GM12878 (cell line): ENCODE measurements at regions of chr17 and their contacts with region 1.

Region 1: DNA sequence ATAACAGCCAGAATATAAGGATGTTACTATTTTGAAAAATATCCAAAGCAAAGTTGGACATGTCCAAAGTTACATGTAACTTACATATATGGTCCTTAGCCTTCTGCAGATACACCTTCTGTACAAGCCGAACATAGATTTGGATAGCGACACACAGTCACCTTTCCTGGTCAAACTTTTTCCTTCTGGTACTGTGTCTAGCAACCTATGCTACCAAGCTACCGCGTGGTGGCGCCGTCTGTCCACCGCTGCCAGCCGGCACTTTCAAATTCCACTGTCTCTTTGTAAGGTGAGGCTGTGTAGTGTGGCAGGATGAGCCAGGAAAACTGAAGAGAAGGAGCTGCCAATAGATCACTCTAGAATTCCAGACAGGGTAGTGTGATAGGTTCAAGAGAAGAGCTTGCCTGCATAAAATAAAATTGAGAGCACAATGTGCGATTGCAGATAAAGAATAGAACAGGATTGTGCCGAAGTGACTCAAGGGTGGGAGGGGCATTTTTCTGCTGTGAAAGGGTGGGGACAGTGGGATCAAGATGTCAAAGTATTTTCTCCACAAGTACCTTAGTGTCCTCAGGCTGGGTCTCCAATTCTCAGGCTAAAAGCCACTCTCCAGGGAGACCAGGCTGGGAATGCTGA is 366.9 kb downstream of the SLC39A11 start:
- DNase-seq: no peak
- ATAC-seq: peak; percentile 59
- H3K4me3 ChIP-seq: no peak overlapping the region
- H3K27ac ChIP-seq: no peak overlapping the region
- H3K4me1 ChIP-seq: peaks cover 18% of the 10 kb centered on the region
- H3K27me3 ChIP-seq: no peaks in the 10 kb centered on the region
- CTCF ChIP-seq: peak; percentile 62 to 87 (median 75)
- EP300 ChIP-seq: no peak
- POLR2A ChIP-seq: no peak
- RAD21 ChIP-seq: peak; percentile 84

Region 2: DNA sequence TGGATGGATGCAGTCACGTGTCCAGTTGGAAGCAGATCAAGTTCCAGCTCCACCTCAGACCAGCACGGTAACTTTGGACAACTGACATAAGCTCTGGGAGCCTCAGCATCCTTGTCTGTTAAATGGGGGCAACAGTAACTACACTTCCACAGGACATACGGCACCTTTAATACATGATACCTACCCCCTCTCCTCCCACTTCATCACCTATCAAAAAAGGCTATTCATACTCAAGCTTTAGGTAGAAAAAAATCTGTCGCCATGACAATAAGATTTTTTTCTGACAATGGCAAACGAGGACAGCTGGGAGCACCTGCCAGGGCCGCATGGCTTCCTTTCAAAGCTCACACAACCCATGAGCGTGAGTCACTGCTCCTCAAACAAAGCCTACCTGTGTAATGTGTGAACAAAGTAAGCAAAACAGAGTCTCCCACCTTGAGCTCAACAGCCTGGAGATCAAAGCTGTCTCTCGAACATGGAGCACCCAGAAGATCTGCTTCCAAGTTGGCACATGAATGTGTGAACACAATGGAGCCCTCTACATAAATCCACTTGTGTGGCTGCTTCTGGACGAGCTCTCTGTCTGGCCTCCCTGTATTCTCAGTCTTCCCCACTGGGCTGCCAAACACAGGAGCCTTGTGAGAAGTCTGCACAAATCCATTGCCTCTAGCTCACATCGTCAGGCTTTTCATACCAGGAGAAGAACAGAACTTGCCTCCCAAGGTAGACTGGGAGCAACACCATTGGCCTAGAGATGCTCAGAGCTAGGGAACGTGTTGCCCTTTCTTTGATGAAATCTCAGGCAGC is 145.0 kb before region 1 on chr17:
- CTCF ChIA-PET with region 1: interaction called, 50 read pairs
- POLR2A ChIA-PET with region 1: no interaction called
- RAD21 ChIA-PET with region 1: interaction called, 3 read pairs
- SMC1A ChIA-PET with region 1: interaction called, 3 read pairs
- in situ Hi-C with region 1: no loop called
- intact Hi-C with region 1: no loop called
- DNase-seq: no peak
- ATAC-seq: peak; percentile 19; the same call in 1 of the 3 replicates
- H3K4me3 ChIP-seq: no peak overlapping the region
- H3K27ac ChIP-seq: no peak overlapping the region
- H3K4me1 ChIP-seq: no peaks in the 10 kb centered on the region
- H3K27me3 ChIP-seq: 0 out of 4 replicates have a peak, but pooled peaks cover 0 to 2% of the 10 kb centered on the region in 2 experiments
- CTCF ChIP-seq: no peak
- EP300 ChIP-seq: no peak
- POLR2A ChIP-seq: no peak
- RAD21 ChIP-seq: no peak

Region 3: GRCh38 chr17:72705905-72706395 is 19.6 kb before region 1 on chr17:
- CTCF ChIA-PET with region 1: interaction called, 48 read pairs
- POLR2A ChIA-PET with region 1: no interaction called
- RAD21 ChIA-PET with region 1: interaction called, 6 read pairs
- SMC1A ChIA-PET with region 1: interaction called, 7 read pairs
- in situ Hi-C with region 1: no loop called
- intact Hi-C with region 1: no loop called
- DNase-seq: no peak
- ATAC-seq: peak; percentile 79
- H3K4me3 ChIP-seq: no peak overlapping the region
- H3K27ac ChIP-seq: peak overlapping the region; percentile 40; the same call in 1 of the 2 replicates
- H3K4me1 ChIP-seq: peaks cover 10% of the 10 kb centered on the region; the same call in 1 of the 2 replicates
- H3K27me3 ChIP-seq: no peaks in the 10 kb centered on the region
- CTCF ChIP-seq: no peak
- EP300 ChIP-seq: no peak
- POLR2A ChIP-seq: no peak
- RAD21 ChIP-seq: no peak

Region 4: GRCh38 chr17:72878975-72879660 is 153.6 kb after region 1 on chr17:
- CTCF ChIA-PET with region 1: no interaction called
- POLR2A ChIA-PET with region 1: no interaction called
- RAD21 ChIA-PET with region 1: no interaction called
- SMC1A ChIA-PET with region 1: no interaction called
- in situ Hi-C with region 1: no loop called
- intact Hi-C with region 1: no loop called
- DNase-seq: no peak
- ATAC-seq: no peak
- H3K4me3 ChIP-seq: no peak overlapping the region
- H3K27ac ChIP-seq: no peak overlapping the region
- H3K4me1 ChIP-seq: no peaks in the 10 kb centered on the region
- H3K27me3 ChIP-seq: no peaks in the 10 kb centered on the region
- CTCF ChIP-seq: no peak
- EP300 ChIP-seq: no peak
- POLR2A ChIP-seq: no peak
- RAD21 ChIP-seq: no peak

Region 5: GRCh38 chr17:73156166-73156840 is 430.8 kb after region 1 on chr17:
- CTCF ChIA-PET with region 1: interaction called, 114 read pairs
- POLR2A ChIA-PET with region 1: interaction called, 6 read pairs
- RAD21 ChIA-PET with region 1: interaction called, 85 read pairs
- SMC1A ChIA-PET with region 1: interaction called, 77 read pairs
- in situ Hi-C with region 1: no loop called
- intact Hi-C with region 1: loop called (anchors 2 kb)
- DNase-seq: no peak
- ATAC-seq: peak; percentile 91
- H3K4me3 ChIP-seq: peak overlapping the region; percentile 39; the same call in 1 of the 2 replicates
- H3K27ac ChIP-seq: peak overlapping the region; percentile 80
- H3K4me1 ChIP-seq: peaks cover 40% of the 10 kb centered on the region
- H3K27me3 ChIP-seq: no peaks in the 10 kb centered on the region
- CTCF ChIP-seq: peak; percentile 87 to 88 (median 87)
- EP300 ChIP-seq: no peak
- POLR2A ChIP-seq: no peak
- RAD21 ChIP-seq: peak; percentile 73

Region 6: GRCh38 chr17:73203135-73203787 is 477.7 kb after region 1 on chr17:
- CTCF ChIA-PET with region 1: interaction called, 19 read pairs
- POLR2A ChIA-PET with region 1: no interaction called
- RAD21 ChIA-PET with region 1: interaction called, 6 read pairs
- SMC1A ChIA-PET with region 1: no interaction called
- in situ Hi-C with region 1: no loop called
- intact Hi-C with region 1: no loop called
- DNase-seq: no peak
- ATAC-seq: peak; percentile 91
- H3K4me3 ChIP-seq: no peak overlapping the region
- H3K27ac ChIP-seq: no peak overlapping the region
- H3K4me1 ChIP-seq: no peaks in the 10 kb centered on the region
- H3K27me3 ChIP-seq: no peaks in the 10 kb centered on the region
- CTCF ChIP-seq: no peak
- EP300 ChIP-seq: no peak
- POLR2A ChIP-seq: no peak
- RAD21 ChIP-seq: no peak

Region 7: DNA sequence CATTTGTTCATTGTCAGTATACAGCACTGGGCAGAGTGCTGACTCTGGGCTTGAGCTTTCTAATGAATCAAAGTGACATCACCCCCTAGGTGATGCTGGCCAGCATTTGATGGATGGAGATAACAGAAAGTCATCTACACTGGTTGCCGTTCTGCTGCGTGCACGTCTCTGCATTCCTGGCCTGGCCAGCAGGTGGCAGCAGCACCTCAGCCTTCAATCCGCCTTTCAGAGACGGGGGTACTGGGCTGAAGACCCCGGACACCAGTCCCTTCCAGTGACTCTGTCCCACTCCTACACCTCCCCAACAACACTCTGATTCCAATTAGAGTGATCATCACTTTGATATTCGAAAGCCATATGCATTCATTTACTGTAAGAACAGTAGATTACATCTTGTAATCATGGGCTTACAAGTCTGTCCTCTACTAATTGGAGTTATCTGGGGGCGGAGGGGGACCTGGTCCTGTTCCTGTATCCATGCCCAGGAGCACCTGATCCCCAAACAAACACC is 530.2 kb after region 1 on chr17:
- CTCF ChIA-PET with region 1: interaction called, 77 read pairs
- POLR2A ChIA-PET with region 1: no interaction called
- RAD21 ChIA-PET with region 1: interaction called, 47 read pairs
- SMC1A ChIA-PET with region 1: interaction called, 115 read pairs
- in situ Hi-C with region 1: no loop called
- intact Hi-C with region 1: loop called (anchors 1 kb)
- DNase-seq: no peak
- ATAC-seq: peak; percentile 94
- H3K4me3 ChIP-seq: no peak overlapping the region
- H3K27ac ChIP-seq: no peak overlapping the region
- H3K4me1 ChIP-seq: no peaks in the 10 kb centered on the region
- H3K27me3 ChIP-seq: no peaks in the 10 kb centered on the region
- CTCF ChIP-seq: peak; percentile 95 to 98 (median 97)
- EP300 ChIP-seq: no peak
- POLR2A ChIP-seq: no peak
- RAD21 ChIP-seq: peak; percentile 97